Cardiac septum (tissue), 1 donor: ENCODE measurements at regions of chr19 and their contacts with region 1.

Region 1: GRCh38 chr19:1551068-1552040 is 16.8 kb downstream of the MEX3D start:
- DNase-seq: no peak

Region 2: GRCh38 chr19:1490311-1491113 is 60.8 kb before region 1 on chr19 and contains the start of gene PCSK4:
- intact Hi-C with region 1: no loop called
- DNase-seq: peak; percentile 99
- total RNA-seq, gene PCSK4: 1.5 TPM

Region 3: DNA sequence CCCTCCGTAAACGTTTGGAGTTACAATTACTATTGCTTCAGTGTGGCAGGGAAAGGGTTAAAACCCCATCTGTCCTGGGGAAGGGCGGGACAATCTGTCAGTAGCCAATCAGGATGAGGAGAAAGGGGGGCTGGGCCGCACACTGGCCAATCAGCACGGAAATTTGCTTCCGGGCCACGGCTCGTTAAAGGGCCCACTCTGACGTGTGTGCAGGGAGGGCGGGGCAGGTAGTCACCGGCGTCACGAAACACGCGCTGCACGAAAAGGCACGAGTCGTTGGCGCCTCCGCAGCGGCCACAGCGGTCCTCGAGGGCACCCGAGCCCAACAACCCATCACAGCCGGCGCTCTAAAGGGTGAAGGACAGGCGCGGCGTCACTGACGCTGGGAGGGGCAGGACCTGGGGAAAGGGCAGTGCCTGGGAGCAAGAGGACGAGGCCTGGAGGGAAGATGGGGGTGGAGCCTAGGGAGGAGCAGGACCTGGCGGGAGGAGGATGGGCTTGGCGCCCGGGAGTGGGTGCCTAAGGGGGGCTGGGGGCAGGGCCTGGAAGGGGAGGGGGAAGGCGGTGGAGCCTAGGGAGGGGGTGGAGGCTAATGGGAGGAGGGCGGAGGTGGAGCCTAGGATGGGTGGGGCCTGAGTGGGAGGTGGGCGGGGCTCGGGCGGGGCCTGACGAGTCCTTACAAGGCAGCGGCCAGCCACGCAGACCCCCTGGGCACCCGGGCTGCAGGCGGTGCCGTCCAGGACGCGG is 43.4 kb before region 1 on chr19:
- intact Hi-C with region 1: no loop called
- DNase-seq: peak; percentile 94

Region 4: DNA sequence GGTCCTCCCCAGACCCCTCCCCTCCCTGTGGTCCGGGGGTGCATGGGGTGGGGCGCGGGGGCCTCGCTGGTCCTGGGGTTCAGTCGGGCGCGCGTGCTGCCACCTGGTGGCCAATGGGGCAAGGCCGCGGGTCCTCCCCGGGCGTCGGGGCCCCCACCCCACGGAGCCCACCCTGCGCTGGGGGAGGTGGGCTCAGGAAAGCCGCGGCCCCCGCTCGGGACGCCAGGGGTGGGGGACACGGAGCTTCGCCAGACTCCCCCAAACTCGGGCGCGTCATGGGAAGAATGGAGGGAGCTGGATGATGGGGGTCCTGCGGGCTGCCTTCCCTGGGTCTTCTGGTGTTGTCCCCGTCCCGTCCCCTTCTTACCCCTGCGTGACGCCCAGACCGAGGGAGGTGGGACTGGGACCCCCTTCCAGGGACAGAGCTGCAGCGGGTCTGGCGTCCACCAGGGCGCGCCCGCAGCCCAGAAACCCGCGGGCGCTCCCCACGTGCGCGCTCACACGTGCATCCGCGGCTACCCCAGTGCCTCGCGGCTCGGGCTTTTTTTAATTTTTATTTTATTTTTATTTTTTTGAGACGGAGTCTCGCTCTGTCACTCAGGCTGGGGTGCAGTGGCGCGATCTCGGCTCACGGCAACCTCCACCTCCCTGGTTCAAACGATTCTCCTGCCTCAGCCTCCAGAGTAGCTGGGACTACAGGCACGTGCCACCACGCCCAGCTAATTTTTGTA is 120.8 kb after region 1 on chr19:
- intact Hi-C with region 1: loop called (anchors 5 kb)
- DNase-seq: no peak

Region 5: GRCh38 chr19:1767464-1767933 is 216.1 kb after region 1 on chr19:
- intact Hi-C with region 1: loop called (anchors 2 kb)
- DNase-seq: no peak